SK-N-SH (cell line): ENCODE measurements at regions of chr4 and their contacts with region 1.

Region 1: GRCh38 chr4:103008875-103009729 is 10.4 kb downstream of the SLC9B1 start:
- DNase-seq: peak; percentile 54
- H3K4me3 ChIP-seq: no peak overlapping the region; a peak in 1 of 4 replicates
- H3K27ac ChIP-seq: no peak overlapping the region
- H3K4me1 ChIP-seq: peaks cover 7 to 12% of the 10 kb centered on the region in 2 experiments; a peak in 3 of 4 replicates
- H3K27me3 ChIP-seq: no peaks in the 10 kb centered on the region
- CTCF ChIP-seq: peak; percentile 82
- EP300 ChIP-seq: no peak
- RAD21 ChIP-seq: peak; percentile 97

Region 2: DNA sequence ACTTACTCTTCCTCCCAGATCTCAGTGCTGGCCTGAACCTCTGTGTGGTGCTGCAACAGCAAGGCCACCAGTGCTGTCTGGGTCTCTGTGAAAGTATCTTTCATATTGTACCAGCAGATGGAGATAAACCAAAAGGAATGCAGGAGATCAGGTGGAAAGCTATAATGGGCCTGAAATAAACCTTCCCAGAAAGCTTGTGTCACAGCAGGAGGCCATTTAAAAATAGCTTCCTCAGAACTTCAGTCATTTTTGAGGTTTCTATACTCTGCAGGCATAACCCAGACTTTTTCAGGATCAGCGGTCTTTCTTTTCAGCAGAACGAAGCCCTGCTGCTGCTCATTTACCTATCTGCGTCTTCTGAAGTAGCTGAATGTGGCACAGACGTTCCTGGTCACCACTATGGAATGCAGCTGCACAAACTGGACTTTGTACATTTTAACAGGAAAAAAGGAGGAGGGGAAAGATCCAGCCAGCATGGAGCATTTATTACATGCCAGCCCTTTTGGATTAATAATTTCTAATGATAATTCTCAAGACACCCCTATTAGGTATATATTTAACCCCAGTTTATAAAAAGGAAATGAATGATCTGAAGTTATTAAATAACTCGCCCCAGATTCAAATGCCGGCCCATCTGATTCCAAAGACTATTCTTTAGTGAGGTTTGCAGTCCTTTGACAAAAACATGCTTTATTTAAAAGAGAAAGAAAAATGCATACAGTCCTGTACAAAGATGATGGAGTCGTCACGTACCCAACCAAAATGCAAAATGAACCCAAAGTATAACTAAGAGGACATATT is 388.2 kb before region 1 on chr4:
- CTCF ChIA-PET with region 1: interaction called, 14 read pairs
- POLR2A ChIA-PET with region 1: no interaction called
- DNase-seq: peak; percentile 33
- H3K4me3 ChIP-seq: peak overlapping the region; percentile 26 to 37; a peak in 2 of 4 replicates
- H3K27ac ChIP-seq: peak overlapping the region; percentile 54 to 58; a peak in 3 of 4 replicates
- H3K4me1 ChIP-seq: peaks cover 0 to 8% of the 10 kb centered on the region in 2 experiments; a peak in 2 of 4 replicates
- H3K27me3 ChIP-seq: no peaks in the 10 kb centered on the region
- CTCF ChIP-seq: peak; percentile 70
- EP300 ChIP-seq: no peak
- RAD21 ChIP-seq: peak; percentile 75

Region 3: GRCh38 chr4:102994803-102995202 is 14.3 kb before region 1 on chr4:
- CTCF ChIA-PET with region 1: no interaction called
- POLR2A ChIA-PET with region 1: no interaction called
- DNase-seq: no peak
- H3K4me3 ChIP-seq: no peak overlapping the region
- H3K27ac ChIP-seq: no peak overlapping the region
- H3K4me1 ChIP-seq: no peaks in the 10 kb centered on the region
- H3K27me3 ChIP-seq: no peaks in the 10 kb centered on the region
- CTCF ChIP-seq: no peak
- EP300 ChIP-seq: no peak
- RAD21 ChIP-seq: no peak

Region 4: DNA sequence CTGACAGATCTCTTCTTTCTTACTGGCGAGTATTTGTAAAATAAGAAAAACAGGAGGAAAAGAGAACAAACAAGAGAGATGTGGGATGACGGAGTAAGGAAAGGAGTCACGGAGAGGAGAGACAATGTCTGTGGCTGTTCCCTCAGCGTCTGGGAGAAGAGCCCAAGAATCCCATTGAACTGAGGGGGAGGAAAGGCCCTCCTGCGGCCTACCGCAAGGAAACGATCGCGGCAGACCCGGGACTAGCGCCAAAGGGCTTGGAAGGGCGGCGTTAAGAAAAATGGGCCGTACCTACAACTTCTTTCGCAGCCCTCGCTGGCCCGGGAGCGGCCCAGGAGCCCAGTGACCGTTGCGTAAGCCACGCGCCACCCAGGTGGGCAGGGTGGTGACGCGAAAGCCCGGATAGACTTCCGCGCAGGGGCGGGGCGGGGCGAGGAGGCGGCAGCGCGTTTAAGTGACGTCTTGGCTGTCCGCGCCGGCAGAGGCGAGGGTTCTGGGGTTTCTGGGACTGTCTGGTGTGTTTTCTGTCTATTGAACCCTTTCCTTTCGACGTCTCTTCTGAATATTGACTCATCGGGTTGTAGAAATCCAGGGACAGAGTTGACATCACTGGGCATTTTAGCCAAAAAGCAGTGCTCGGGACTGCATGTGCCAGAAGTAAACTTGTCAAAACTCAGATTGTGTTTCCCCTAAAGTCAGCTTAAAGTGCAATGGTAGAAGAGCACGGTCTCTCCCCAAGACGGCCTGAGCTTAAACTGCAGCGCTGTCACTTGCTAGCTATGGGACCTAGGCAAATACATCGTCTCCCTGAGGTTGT is 10.4 kb after region 1 on chr4 and contains the start of gene SLC9B1:
- CTCF ChIA-PET with region 1: interaction called, 10 read pairs
- POLR2A ChIA-PET with region 1: no interaction called
- DNase-seq: peak; percentile 77
- H3K4me3 ChIP-seq: peak within 1 kb of the TSS; percentile 50 to 60
- H3K27ac ChIP-seq: peak within 1 kb of the TSS; percentile 79 to 90
- H3K4me1 ChIP-seq: peaks cover 0 to 2% of the 10 kb centered on the region in 2 experiments; a peak in 1 of 4 replicates
- H3K27me3 ChIP-seq: no peaks in the 10 kb centered on the region
- CTCF ChIP-seq: no peak
- EP300 ChIP-seq: peak in 1 of 2 experiments; percentile 33; a peak in 1 of 4 replicates
- RAD21 ChIP-seq: no peak
- polyA plus RNA-seq, gene SLC9B1: 0.21 and 0.37 TPM in 2 replicates

Region 5: GRCh38 chr4:103244246-103244645 is 235.1 kb after region 1 on chr4:
- CTCF ChIA-PET with region 1: no interaction called
- POLR2A ChIA-PET with region 1: no interaction called
- DNase-seq: no peak
- H3K4me3 ChIP-seq: no peak overlapping the region
- H3K27ac ChIP-seq: no peak overlapping the region
- H3K4me1 ChIP-seq: no peaks in the 10 kb centered on the region
- H3K27me3 ChIP-seq: no peaks in the 10 kb centered on the region
- CTCF ChIP-seq: no peak
- EP300 ChIP-seq: no peak
- RAD21 ChIP-seq: no peak